GM12878 (cell line): ENCODE measurements at regions of chr16 and their contacts with region 1.

Region 1: DNA sequence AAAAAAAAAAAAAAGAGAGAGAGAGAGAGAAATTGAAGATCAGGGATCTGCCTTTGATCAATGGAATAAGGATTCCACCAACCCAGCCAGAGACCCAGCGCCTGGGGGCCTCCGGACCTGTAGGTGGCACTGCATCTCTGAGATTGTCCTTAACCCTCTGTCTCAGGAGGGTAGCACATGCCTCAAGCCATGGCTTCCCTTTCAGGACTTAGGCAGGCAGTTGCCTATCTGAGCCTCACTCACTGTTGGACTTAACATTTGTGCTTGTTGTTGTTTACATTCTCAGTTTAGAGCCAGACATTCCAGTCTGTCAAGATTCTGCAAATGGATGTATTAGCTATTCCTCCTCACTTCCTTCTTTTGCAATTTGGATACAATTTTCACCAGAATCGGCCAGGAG is 5.1 kb upstream of the SCNN1B start:
- DNase-seq: no peak
- ATAC-seq: peak; percentile 77
- H3K4me3 ChIP-seq: no peak overlapping the region
- H3K27ac ChIP-seq: no peak overlapping the region
- H3K4me1 ChIP-seq: peaks cover 7% of the 10 kb centered on the region; the same call in 1 of the 2 replicates
- H3K27me3 ChIP-seq: peaks cover 0 to 3% of the 10 kb centered on the region in 2 experiments; a peak in 2 of 4 replicates
- CTCF ChIP-seq: peak; percentile 32 to 48 (median 37); a peak in 4 of 6 replicates
- EP300 ChIP-seq: no peak
- POLR2A ChIP-seq: no peak
- RAD21 ChIP-seq: peak; percentile 63

Region 2: DNA sequence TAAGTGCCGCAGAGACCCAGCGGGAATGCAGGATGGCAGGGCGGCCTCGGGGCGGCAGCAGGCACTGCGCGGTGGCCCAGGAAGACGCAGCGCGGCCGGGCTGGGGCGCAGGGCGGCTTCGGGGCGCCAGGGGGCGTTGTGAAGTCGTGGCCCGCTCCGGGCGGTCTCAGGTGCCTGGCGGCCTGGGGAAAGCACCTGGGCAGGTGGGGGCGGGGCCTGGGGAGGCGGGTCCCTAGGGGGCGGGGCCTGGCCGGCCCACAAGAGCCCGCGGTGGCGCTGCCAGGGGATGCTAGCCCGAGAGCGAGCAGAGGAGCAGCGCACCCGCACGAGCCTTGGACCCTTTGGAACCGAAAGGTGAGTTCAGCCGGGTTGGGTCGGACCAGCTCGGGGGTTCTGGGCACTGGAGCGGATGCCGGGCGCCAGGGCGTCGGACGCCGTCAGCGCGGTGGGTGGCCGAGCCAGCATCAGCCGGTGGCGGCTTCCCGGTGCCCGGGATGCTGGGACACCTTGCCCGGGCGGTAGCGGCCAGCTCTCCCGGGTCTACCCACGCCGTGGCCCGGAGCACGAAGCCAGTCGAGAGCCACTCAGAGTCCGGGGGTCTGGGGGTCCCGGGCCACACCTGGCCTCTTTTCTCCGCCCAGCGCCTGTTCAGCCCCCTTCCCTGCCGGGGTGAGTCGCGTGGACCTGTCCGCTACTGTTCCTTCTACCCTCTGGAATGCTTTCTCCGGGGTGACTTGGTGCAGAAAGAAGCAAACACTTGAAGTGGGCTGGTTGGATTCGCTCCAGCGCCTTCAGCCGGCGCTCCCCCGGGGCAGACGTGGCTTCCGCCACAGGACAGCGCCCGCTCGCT is 114.3 kb before region 1 on chr16 and contains the start of gene SCNN1G:
- CTCF ChIA-PET with region 1: interaction called, 9 read pairs
- POLR2A ChIA-PET with region 1: no interaction called
- RAD21 ChIA-PET with region 1: interaction called, 3 read pairs
- SMC1A ChIA-PET with region 1: interaction called, 3 read pairs
- in situ Hi-C with region 1: no loop called
- intact Hi-C with region 1: loop called (anchors 5 kb)
- DNase-seq: peak; percentile 23
- ATAC-seq: peak; percentile 98
- H3K4me3 ChIP-seq: no peak within 1 kb of the TSS
- H3K27ac ChIP-seq: no peak within 1 kb of the TSS
- H3K4me1 ChIP-seq: peaks cover 7% of the 10 kb centered on the region
- H3K27me3 ChIP-seq: peaks cover 3 to 7% of the 10 kb centered on the region in 2 experiments; a peak in 3 of 4 replicates
- CTCF ChIP-seq: peak; percentile 95 to 98 (median 96); a peak in 5 of 6 replicates
- EP300 ChIP-seq: no peak
- POLR2A ChIP-seq: no peak
- RAD21 ChIP-seq: peak; percentile 95
- polyA plus RNA-seq, gene SCNN1G: 0.05 TPM in 1 of 2 experiments, not detected in the other